Naive thymus-derived CD8-positive, alpha-beta T cell (primary cell): ENCODE measurements at regions of chr13 and their contacts with region 1.

Region 1: GRCh38 chr13:73954808-73955207 is 179.4 kb downstream of the KLF12 start:
- DNase-seq: no peak
- ATAC-seq: peak in 1 of 2 donors; percentile 27
- H3K4me3 Mint-ChIP-seq: no peak overlapping the region
- H3K27ac Mint-ChIP-seq: no peak overlapping the region
- H3K4me1 Mint-ChIP-seq: peaks cover 18 to 69% (median 58%) of the 10 kb centered on the region in 4 donors
- H3K27me3 Mint-ChIP-seq: no peaks in the 10 kb centered on the region

Region 2: GRCh38 chr13:74423434-74423833 is 468.6 kb after region 1 on chr13:
- POLR2A ChIA-PET with region 1: interaction called, 10 read pairs
- DNase-seq: no peak
- ATAC-seq: no peak
- H3K4me3 Mint-ChIP-seq: no peak overlapping the region
- H3K27ac Mint-ChIP-seq: no peak overlapping the region
- H3K4me1 Mint-ChIP-seq: peaks cover 0 to 1% (median 0%) of the 10 kb centered on the region in 4 donors
- H3K27me3 Mint-ChIP-seq: peaks cover 0 to 6% (median 0%) of the 10 kb centered on the region in 5 donors